Vagina (tissue), 2 donors: ENCODE measurements at regions of chr22 and their contacts with region 1.

Region 1: GRCh38 chr22:50582562-50583293 is at the start of gene CHKB:
- DNase-seq: peak in 1 of 2 donors; percentile 97
- H3K4me3 ChIP-seq: peak within 1 kb of the TSS; percentile 77 to 81
- H3K27ac ChIP-seq: peak within 1 kb of the TSS; percentile 97
- H3K4me1 ChIP-seq: peaks cover 28% of the 10 kb centered on the region
- H3K27me3 ChIP-seq: no peaks in the 10 kb centered on the region
- CTCF ChIP-seq: no peak
- POLR2A ChIP-seq: peak; percentile 66 to 93
- total RNA-seq, gene CHKB: 51.6 TPM

Region 2: GRCh38 chr22:49948958-49949913 is 633.5 kb before region 1 on chr22:
- intact Hi-C with region 1: no loop called
- DNase-seq: no peak
- H3K4me3 ChIP-seq: peak overlapping the region in 1 of 2 donors; percentile 10
- H3K27ac ChIP-seq: peak overlapping the region; percentile 89
- H3K4me1 ChIP-seq: peaks cover 52% of the 10 kb centered on the region
- H3K27me3 ChIP-seq: no peaks in the 10 kb centered on the region
- CTCF ChIP-seq: no peak
- POLR2A ChIP-seq: no peak

Region 3: DNA sequence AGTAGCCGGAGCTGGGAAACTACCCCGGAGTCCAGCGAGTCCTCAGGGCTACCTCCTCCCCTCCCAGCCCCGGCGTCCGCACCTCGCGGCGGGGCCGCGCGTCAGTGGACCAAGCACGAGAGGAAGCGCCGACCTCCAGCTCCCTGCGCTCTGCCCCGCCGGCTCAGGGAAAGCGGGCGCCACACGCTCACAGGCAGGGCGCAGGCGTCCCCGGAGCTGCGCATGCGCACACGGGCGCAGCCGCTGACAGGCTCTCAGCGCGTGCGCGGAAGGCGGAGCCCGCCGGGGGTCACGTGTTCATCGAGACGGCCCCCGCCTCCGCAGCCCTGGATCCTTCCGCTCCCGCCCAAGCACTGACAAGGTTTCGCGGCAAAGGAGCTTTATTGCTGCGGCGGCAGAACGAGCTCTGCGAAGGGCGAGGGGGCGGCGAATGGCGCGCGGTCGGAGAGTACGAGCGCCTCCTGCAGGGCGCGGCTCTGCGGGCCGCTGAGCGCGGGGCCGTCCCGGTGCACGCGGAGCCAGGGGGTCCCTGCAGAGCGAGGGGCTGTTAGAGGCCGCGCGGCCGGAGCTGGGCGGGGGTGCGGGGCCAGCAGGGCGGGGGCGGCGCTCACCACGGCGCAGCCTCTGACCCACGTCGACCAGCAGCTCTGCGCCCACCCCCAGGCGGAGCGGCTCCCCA is 57.2 kb before region 1 on chr22 and contains the start of gene SCO2:
- intact Hi-C with region 1: loop called (anchors 5 kb)
- DNase-seq: no peak
- H3K4me3 ChIP-seq: peak within 1 kb of the TSS; percentile 61 to 84
- H3K27ac ChIP-seq: peak within 1 kb of the TSS; percentile 92
- H3K4me1 ChIP-seq: peaks cover 48% of the 10 kb centered on the region
- H3K27me3 ChIP-seq: no peaks in the 10 kb centered on the region
- CTCF ChIP-seq: peak in 1 of 3 experiments; percentile 45
- POLR2A ChIP-seq: peak; percentile 45 to 52
- total RNA-seq, gene SCO2: 25.0 TPM

Region 4: GRCh38 chr22:50544078-50544745 is 38.5 kb before region 1 on chr22:
- intact Hi-C with region 1: loop called (anchors 5 kb)
- DNase-seq: no peak
- H3K4me3 ChIP-seq: peak overlapping the region; percentile 1 to 27
- H3K27ac ChIP-seq: peak overlapping the region; percentile 72
- H3K4me1 ChIP-seq: peaks cover 47% of the 10 kb centered on the region
- H3K27me3 ChIP-seq: peaks cover 7% of the 10 kb centered on the region
- CTCF ChIP-seq: peak in 2 of 3 experiments; percentile 26
- POLR2A ChIP-seq: no peak

Region 5: GRCh38 chr22:50612528-50613221 is 29.9 kb after region 1 on chr22:
- intact Hi-C with region 1: no loop called
- DNase-seq: no peak
- H3K4me3 ChIP-seq: no peak overlapping the region
- H3K27ac ChIP-seq: no peak overlapping the region
- H3K4me1 ChIP-seq: no peaks in the 10 kb centered on the region
- H3K27me3 ChIP-seq: no peaks in the 10 kb centered on the region
- CTCF ChIP-seq: no peak
- POLR2A ChIP-seq: no peak